Cardiac septum (tissue), 1 donor: ENCODE measurements at regions of chr1 and their contacts with region 1.

Region 1: DNA sequence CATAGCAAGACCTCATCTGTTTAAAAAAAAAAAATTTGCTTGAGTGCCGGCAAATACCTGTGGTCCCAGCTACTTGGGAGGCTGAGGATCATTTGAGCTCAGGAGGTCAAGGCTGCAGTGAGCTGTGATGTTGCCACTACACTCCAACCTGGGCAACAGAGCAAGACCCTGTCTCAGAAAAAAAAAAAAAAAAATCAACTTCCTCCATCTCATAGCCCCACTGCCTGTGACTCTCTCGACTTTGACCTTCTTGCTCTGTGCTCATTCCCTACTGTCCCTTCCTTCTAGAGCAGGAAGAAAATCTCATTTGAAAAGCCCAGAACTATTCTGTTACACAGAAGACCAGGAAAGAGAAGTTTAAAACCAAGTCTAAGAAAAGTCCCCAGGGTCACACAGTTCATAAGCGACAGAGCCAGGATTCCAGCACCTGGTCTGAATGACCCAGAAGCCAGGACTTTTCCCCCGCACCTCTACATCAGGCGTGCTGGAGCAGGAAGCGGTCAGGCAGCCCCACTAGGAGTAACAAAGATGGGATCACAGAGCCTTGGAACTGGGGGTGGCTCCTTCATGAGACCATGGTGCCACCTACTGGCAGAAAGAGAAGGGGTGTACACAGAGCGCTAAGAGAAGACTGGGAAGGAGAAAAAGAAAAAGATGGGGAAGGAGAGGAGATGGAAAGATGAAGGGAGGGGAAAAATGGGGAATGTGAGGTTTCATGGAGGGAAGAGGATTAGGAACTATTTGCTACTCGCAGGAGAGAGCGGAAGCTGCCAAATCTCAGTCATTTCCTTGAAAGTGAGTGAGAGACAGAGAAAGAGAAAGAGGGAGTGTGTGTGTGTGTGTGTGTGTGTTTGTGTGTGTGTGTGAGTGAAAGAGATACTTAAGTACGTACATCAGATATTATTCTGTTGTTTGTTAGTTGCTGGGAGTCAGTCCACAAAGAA is 3.1 kb upstream of the P3R3URF start:
- DNase-seq: no peak

Region 2: DNA sequence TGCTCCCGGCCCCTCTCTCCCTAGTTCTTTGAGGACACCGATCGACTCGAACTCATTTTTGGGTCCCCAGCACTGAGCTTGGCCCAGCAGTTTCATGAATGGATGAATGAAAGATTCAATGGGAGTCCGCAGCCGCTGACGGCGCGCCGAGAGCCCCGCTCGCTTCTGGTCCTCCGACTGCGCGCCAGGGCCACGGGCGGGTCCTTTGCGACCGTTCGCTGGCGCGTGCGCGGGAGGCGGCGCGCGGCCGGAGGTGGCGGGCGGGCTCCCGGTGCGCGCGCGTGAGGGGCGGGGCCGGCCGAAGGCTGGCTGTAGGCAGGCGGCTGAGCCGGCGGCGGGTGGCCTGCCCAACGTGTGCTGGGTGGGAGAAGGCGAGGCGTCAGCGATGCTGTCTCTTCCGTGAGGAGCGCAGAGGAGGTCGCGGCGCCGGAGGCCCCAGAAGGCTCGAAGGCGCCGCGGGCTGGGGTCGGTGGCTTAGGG is 376.1 kb before region 1 on chr1 and contains the start of gene MAST2:
- intact Hi-C with region 1: loop called (anchors 10 kb)
- DNase-seq: peak; percentile 95
- total RNA-seq, gene MAST2: 81.2 TPM

Region 3: GRCh38 chr1:46036894-46037839 is 142.2 kb before region 1 on chr1:
- intact Hi-C with region 1: loop called (anchors 1 kb)
- DNase-seq: peak; percentile 90

Region 4: DNA sequence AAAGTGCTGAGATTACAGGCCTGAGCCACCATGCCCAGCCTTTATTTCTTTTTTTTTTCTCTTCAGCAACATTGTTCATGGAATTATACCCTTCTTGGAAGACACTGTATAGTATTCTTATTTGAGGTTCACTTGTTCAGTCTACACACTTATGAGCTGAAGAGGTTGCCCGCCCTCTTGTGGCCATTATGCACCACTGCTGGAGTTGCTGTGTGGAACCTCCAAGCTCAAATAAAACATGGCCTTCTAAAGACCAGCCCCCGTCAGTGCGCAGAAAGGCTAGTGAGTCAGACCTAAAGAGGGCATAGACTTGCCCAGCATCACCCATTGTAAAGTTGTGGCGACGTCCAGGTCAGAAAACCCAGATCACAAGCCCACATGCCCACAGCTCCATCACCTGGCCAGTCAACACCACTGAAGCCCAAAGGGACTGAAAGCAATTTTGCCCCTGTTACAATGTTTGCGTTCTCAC is 44.1 kb after region 1 on chr1:
- intact Hi-C with region 1: loop called (anchors 5 kb)
- DNase-seq: no peak

Region 5: DNA sequence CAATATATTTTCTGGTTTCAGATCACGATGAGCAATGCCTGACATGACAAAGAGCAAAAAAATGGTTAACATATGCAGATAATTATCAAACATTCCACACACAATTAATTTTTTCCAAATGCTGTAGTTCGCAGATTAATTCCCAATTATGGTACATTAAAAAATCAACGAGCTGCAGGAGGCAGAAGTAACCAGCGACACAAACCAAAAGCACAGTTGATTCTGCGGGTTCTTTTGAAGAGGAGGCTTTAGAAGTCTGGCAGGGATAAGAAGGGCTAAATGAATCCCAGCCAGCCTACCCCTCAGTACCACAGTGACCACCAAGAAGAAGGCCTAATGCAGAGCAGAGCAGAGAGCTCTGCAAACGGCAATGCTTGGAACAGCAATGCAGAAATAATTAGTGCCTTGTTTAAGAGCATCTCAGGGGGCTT is 389.1 kb after region 1 on chr1:
- intact Hi-C with region 1: no loop called
- DNase-seq: no peak